CD4-positive, alpha-beta memory T cell (primary cell): ENCODE measurements at regions of chr6 and their contacts with region 1.

Region 1: GRCh38 chr6:42367353-42368011 is 84.2 kb downstream of the TRERF1 start:
- DNase-seq: peak in 1 of 5 donors; percentile 29
- H3K4me3 ChIP-seq: peak overlapping the region; percentile 19 to 48
- H3K4me3 Mint-ChIP-seq: peak overlapping the region; percentile 76 to 89 (median 82)
- H3K27ac ChIP-seq: peak overlapping the region; percentile 48
- H3K27ac Mint-ChIP-seq: peak overlapping the region; percentile 90 to 95 (median 94)
- H3K4me1 ChIP-seq: peaks cover 72% of the 10 kb centered on the region
- H3K4me1 Mint-ChIP-seq: peaks cover 55 to 86% (median 70%) of the 10 kb centered on the region in 4 donors
- H3K27me3 ChIP-seq: no peaks in the 10 kb centered on the region
- H3K27me3 Mint-ChIP-seq: no peaks in the 10 kb centered on the region

Region 2: GRCh38 chr6:42402184-42402583 is 34.7 kb after region 1 on chr6:
- CTCF ChIA-PET with region 1: interaction called, 5 read pairs
- POLR2A ChIA-PET with region 1: interaction called, 13 read pairs
- intact Hi-C with region 1: loop called (anchors 5 kb)
- DNase-seq: peak in 1 of 5 donors; percentile 65
- H3K4me3 ChIP-seq: no peak overlapping the region
- H3K4me3 Mint-ChIP-seq: peak overlapping the region; percentile 31 to 77 (median 58)
- H3K27ac ChIP-seq: no peak overlapping the region
- H3K27ac Mint-ChIP-seq: peak overlapping the region; percentile 61 to 95 (median 90)
- H3K4me1 ChIP-seq: peaks cover 86% of the 10 kb centered on the region
- H3K4me1 Mint-ChIP-seq: peaks cover 67 to 97% (median 80%) of the 10 kb centered on the region in 4 donors
- H3K27me3 ChIP-seq: no peaks in the 10 kb centered on the region
- H3K27me3 Mint-ChIP-seq: no peaks in the 10 kb centered on the region

Region 3: GRCh38 chr6:42407379-42407778 is 39.9 kb after region 1 on chr6:
- CTCF ChIA-PET with region 1: interaction called, 5 read pairs
- POLR2A ChIA-PET with region 1: interaction called, 13 read pairs
- intact Hi-C with region 1: loop called (anchors 5 kb)
- DNase-seq: no peak
- H3K4me3 ChIP-seq: no peak overlapping the region
- H3K4me3 Mint-ChIP-seq: peak overlapping the region; percentile 17 to 75 (median 52)
- H3K27ac ChIP-seq: peak overlapping the region; percentile 8
- H3K27ac Mint-ChIP-seq: peak overlapping the region; percentile 28 to 91 (median 75)
- H3K4me1 ChIP-seq: peaks cover 66% of the 10 kb centered on the region
- H3K4me1 Mint-ChIP-seq: peaks cover 58 to 83% (median 69%) of the 10 kb centered on the region in 4 donors
- H3K27me3 ChIP-seq: no peaks in the 10 kb centered on the region
- H3K27me3 Mint-ChIP-seq: no peaks in the 10 kb centered on the region